ENCODE measurements at regions of chr10 and their contacts with region 1.

Region 1: DNA sequence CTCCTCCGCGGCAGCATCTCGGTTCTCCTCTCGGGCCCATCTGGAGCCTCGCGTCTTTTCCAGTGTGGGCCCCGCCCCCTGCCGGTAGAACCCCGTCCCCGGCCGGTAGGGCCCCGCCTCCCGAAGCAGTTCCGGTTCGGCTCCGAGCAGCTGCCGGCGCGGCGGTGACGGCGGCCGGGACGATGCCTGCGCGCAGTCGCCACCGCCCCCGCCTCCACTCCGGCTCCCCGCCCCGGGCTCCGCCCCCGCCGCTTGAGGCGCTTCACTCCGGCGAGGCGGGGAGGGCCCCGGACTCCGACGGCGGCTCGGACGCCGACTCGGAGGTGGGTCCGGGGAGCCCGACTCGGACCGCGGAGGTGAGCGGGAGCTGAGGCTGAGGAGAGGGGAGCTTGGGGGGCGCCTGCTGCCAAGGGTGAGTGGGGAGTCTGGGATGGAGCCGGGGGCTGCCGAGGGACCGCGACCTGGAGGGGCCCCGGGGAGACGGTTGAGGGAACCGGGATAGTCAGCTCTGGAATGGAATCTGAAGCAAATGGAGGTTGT is at the start of gene SAMD8:
- H3K4me3 ChIP-seq: peak within 1 kb of the TSS; percentile 86
- H3K27ac ChIP-seq: peak within 1 kb of the TSS; percentile 93
- H3K4me1 ChIP-seq: peaks cover 7% of the 10 kb centered on the region
- CTCF ChIP-seq: peak; percentile 10; the same call in 1 of the 2 replicates

Region 2: GRCh38 chr10:74826142-74827044 is 285.0 kb before region 1 on chr10 and contains the start of gene KAT6B:
- CTCF ChIA-PET with region 1: no interaction called
- POLR2A ChIA-PET with region 1: no interaction called
- H3K4me3 ChIP-seq: peak within 1 kb of the TSS; percentile 86
- H3K27ac ChIP-seq: peak within 1 kb of the TSS; percentile 99
- H3K4me1 ChIP-seq: peaks cover 29% of the 10 kb centered on the region
- CTCF ChIP-seq: peak; percentile 69

Region 3: DNA sequence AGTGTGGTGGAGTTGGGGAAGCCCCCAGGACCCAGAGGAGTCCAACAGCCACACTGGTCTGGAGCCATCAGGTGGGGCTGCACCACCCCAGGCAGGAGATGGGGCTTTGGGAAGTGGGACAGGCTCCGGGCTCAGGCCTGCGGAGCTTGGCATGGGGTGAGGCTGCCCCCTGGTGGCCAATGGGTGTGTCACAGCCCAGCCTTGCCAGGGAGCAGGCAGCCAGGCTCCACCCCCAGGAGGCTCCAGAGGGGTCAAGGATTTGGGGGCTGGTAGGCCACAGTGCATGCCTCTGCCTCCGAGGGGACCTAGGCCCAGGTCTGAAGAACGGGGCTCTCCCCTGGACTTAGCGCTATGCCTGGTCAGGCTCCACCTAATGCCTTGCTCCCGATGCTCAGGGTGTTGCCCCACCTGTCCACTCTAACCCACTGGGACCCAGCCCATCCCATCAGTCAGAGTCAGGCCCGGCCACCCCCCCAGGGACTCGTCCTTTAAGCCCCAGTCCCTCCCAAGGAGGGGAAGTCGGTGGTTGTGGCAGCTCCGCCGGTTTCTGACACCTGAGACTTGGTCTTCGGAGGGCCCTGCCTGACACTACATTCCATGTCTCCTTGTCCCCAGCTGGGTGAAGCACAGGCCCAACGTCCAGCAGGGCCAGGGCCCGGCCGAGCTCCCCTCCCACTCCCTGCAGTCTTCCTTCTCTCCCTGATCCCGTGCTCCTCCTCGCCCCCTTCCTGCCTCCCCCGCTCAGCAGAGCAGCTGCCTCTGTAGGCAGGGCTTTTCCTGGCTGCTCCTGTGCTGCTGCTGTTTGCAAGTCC is 11.3 kb before region 1 on chr10:
- CTCF ChIA-PET with region 1: interaction called, 22 read pairs
- POLR2A ChIA-PET with region 1: no interaction called
- H3K4me3 ChIP-seq: no peak overlapping the region
- H3K27ac ChIP-seq: no peak overlapping the region
- H3K4me1 ChIP-seq: no peaks in the 10 kb centered on the region
- CTCF ChIP-seq: peak; percentile 96

Region 4: DNA sequence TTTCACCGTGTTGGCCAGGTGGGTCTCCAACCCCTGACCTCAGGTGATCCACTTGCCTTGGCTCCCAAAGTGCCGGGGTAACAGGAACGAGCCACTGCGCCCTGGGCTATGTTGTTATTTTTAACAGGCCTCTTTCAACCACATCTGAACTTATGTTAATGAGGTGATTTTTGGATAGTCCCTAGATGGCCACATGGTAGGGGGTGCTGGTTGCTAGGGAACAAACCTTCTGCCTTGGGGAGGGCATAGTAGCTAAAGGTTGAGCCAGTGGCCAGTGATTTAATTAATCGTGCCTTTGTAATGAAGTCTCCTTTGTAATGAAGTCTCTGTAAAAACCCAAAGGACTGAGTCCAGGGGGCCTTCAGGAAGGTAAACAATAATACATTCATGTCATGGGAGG is 115.2 kb after region 1 on chr10:
- CTCF ChIA-PET with region 1: interaction called, 6 read pairs
- POLR2A ChIA-PET with region 1: interaction called, 10 read pairs
- H3K4me3 ChIP-seq: no peak overlapping the region
- H3K27ac ChIP-seq: no peak overlapping the region
- H3K4me1 ChIP-seq: peaks cover 15% of the 10 kb centered on the region
- CTCF ChIP-seq: no peak

Region 5: DNA sequence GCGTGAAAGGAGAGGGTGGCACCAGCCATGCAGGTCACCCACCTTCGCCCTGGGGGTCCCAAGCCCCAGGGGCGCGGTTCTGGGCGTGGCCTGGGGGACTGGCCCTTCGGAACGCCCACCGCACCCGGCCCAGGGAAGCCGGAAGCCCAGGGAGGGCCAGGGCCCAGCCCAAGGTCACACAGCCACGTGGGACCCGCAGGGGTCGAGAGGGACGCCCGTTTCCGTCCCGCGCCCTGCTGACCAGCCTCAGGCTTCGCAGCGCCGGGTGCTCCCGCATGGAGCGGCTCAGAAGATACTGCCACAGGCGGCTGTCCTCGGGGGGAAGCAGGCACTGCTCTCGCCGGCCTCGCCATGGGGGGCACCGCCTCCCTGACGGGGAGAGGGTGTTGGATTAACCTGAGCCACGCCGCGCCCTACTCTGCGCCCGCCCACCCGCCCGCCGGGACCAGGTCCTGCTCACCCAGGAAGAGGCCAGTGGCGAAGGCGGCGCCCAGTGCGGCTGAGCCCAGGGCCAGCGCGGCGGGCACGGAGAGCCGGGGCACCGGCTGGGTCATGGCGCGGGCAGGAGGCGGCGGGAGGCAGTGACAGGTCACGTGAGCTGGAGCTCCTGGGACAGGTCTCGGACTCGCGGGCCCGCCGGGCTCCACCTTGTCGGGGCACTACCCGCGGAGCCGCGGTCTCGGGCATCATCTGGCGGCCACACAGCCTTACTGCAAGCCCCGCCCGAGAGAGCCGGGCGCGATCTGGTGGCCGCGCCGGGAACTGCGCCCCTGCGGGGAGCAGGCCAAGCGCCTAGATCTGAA is 124.1 kb after region 1 on chr10 and contains the start of gene COMTD1:
- CTCF ChIA-PET with region 1: interaction called, 6 read pairs
- POLR2A ChIA-PET with region 1: interaction called, 10 read pairs
- H3K4me3 ChIP-seq: peak within 1 kb of the TSS; percentile 62
- H3K27ac ChIP-seq: peak within 1 kb of the TSS; percentile 92
- H3K4me1 ChIP-seq: no peaks in the 10 kb centered on the region; the same call in 1 of the 2 replicates
- CTCF ChIP-seq: peak; percentile 100

Measured in HEK293 (cell line).